ENCODE measurements at regions of chr12 and their contacts with region 1.

Region 1: DNA sequence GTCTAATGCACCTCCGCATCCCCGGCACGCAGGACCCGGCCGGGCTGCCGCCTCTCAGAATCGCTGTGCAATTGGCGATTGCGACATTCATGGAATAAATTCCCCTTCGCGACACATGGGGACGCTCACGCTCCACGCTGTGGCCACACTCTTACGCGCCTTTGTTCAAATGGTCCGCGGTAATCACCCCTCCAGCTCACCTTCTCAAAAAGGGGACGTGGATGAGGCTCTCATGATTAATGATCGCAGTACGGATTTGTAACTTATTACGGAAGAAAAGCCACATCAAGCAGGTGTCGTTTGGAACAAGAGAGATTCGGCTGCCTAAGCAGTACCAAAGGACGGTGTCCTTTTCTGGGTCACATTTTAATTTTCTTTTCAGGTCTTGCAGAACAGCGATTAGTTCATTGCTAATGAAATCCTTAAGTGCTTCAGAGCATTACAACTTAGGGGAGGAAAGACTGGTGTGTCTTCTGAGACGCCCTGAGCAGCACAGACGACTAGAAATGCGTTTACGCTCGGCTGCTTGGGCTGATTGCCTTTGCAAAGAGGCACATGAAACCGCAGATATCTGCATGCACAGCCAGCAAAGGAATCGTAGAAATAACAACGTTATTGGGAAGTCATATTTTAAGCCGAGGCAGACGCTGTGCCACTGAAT is 37.3 kb upstream of the ADGRD1 start:
- DNase-seq: peak; percentile 67
- ATAC-seq: peak; percentile 66 to 86

Region 2: GRCh38 chr12:131116391-131117117 is 200.2 kb after region 1 on chr12:
- intact Hi-C with region 1: no loop called
- DNase-seq: no peak
- ATAC-seq: peak in 1 of 2 donors; percentile 51

Region 3: DNA sequence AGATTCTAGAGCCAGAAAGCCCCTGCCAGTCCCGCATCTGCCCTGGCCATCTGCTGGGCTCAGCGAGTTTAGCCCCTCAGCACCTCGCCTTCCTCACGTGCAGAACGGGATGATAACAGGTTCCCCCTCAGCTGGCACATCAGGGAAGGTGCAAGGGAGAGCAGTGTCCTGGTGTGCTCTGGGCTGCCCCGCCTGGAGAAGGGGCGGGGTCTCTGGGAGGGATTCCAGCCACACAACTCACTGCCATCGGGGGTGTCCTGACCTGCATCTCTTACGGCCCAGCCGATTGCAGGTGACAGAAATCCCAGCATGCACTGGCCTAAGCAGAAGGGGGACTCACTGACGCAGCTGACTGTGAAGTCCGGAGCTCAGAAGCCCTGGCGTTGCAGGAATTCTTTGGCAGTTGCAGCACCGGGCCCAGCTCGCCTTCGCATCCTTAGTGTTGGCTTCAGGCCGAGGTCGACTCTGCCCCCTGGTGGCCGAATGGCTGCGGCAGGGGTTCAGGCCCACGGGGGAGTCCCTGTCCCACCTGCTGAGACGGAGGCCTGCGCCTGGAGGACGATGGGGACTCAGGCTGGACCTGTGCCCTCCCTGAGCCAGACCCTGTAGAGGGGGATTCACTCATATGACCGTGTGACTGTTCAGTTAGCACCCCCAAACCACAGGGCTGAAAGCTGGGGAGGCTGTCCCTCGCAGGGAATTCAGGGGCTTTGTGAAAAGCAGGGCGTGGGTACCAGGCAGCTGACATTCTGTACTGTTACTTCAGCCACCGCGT is 215.9 kb after region 1 on chr12:
- intact Hi-C with region 1: loop called (anchors 2 to 10 kb)
- DNase-seq: peak; percentile 70
- ATAC-seq: peak; percentile 68 to 82

Region 4: DNA sequence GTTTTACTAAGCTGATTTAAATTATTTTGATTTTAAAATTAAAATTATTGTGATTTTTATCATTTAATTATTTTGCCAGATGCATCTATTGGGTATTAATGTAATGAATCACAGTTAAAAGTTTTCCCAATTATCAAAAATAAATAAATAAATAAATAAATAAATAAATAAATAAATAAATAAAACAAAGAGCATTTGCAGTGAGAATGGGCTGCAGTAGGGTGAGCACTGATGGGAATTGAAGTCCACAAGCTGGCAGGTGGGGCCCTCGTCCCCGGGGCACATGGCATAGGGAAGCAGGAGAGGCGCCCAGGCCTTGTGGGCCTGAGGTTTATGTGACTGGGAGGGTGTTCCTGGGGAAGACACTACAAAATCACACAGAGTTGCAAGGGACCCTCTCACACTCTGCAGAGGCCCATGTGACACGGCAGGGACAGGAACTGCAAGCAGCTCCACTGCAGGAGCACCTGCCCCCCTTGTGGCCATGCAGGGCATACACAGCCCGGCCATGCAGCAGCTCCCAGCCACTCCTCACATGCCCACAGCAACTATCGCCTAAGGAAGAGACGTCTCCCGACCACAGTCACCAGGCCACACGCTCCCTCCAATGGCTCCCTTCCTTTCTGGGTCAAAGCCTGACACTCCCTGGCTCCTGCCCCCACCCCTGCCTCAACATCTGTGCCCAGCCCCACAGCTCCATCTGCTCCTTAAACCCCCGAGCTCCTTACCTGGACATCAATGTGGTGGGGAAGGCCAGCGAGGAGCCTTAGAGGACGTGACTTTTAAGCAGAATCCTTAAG is 538.2 kb after region 1 on chr12:
- intact Hi-C with region 1: loop called in 1 of 2 experiments (anchors 10 kb)
- DNase-seq: no peak
- ATAC-seq: peak; percentile 63 to 77

Measured in left cardiac atrium (tissue), 4 donors.